Dendritic cell treated with granulocyte-macrophage colony-stimulating factor and Interleukin-4, amounts not matched to agents 40 ng/mL and 50 ng/mL, for 4 days (primary cell): ENCODE measurements at regions of chr17 and their contacts with region 1.

Region 1: DNA sequence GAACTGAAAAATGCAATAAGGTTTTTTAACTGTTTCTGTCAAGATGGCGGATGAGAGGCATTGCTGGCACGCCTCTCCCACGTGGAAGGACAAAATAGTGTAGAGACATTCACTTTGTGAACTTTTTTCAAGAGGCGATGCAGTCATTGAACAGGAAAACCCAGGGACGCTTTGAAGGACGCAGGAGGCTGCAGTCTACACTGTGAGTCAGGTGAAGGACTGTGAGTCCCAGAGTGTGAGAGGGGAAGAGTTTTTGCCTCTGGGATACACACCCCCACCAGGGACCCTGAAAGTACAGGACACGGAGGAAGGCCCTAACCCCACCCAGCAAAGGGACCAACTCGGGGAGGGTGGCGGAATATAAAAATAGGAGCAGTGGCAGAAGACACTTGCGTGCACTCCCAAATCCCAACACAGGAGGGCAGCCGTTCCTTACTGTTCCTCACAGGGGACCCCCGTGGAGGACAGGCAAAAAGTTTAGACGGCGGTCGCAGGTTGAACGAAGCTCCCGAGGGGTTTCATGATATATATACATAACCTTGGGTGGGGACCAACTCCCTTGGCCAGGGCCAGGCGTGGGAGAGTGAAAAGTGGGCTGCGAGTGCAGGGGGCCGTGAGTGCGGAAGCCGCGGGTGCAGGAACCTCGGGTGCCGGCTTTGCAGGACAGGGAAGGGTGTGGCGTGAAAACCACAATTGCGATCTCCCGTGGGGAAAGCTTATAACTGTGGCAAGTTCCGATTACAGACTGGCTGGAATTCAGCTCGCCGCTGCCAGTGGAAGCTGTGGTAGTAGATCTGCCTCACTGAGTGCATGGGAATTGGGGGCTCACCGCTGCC is 82.0 kb upstream of the ALOX12 start:
- H3K4me3 Mint-ChIP-seq: peak overlapping the region; percentile 83
- H3K27ac Mint-ChIP-seq: peak overlapping the region; percentile 74
- H3K4me1 Mint-ChIP-seq: peaks cover 27% of the 10 kb centered on the region
- H3K27me3 Mint-ChIP-seq: peaks cover 25% of the 10 kb centered on the region

Region 2: GRCh38 chr17:7004398-7005253 is 90.8 kb after region 1 on chr17:
- intact Hi-C with region 1: loop called (anchors 2 kb)
- H3K4me3 Mint-ChIP-seq: no peak overlapping the region
- H3K27ac Mint-ChIP-seq: no peak overlapping the region
- H3K4me1 Mint-ChIP-seq: peaks cover 55% of the 10 kb centered on the region
- H3K27me3 Mint-ChIP-seq: no peaks in the 10 kb centered on the region

Region 3: DNA sequence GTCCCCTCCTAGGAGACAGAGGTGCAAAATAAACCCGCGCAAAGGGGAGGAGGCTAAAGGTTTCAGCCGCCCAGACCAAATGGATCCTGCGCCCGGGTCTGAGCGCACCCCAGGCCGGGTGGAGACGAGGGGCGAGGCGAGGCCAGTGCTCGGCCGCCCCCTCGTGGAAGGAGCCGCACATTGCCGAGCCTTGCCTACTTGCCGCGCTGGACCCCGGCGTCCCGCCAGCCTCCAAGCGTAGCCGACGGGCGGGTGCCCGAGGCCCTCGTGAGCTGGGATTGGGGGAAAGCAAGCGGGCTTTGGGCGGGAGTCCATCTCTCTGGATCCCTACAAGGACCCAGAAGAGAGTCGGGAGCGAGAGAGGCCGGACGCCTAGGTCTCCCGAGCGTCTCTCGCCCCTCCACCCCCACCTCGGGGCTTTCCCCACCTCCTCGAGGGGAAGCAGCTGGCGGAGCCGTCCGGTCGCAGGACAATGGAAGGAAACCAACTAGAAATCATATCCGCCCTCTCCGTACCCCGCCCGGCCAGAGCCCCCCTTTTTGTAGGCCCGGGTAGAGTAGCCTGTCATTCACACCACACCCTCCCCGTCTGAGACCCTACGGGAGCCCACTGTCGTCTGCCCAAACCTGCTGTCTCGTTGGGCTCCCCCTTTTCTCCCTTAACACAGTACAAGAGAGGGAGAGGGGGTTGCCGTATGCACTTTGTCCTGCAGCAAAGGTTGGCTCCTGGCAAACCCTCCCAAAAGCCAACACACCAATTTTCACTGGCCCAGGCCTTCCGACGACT is 108.4 kb after region 1 on chr17:
- intact Hi-C with region 1: loop called (anchors 5 kb)
- H3K4me3 Mint-ChIP-seq: peak overlapping the region; percentile 59
- H3K27ac Mint-ChIP-seq: peak overlapping the region; percentile 73
- H3K4me1 Mint-ChIP-seq: peaks cover 53% of the 10 kb centered on the region
- H3K27me3 Mint-ChIP-seq: peaks cover 55% of the 10 kb centered on the region